Lower lobe of right lung (tissue), 2 donors: ENCODE measurements at regions of chr4 and their contacts with region 1.

Region 1: GRCh38 chr4:78612398-78613178 is 61.0 kb downstream of the ANXA3 start:
- DNase-seq: no peak
- ATAC-seq: peak; percentile 52 to 73
- H3K4me3 ChIP-seq: no peak overlapping the region
- H3K27ac ChIP-seq: no peak overlapping the region
- H3K4me1 ChIP-seq: peaks cover 10% of the 10 kb centered on the region
- H3K27me3 ChIP-seq: no peaks in the 10 kb centered on the region
- CTCF ChIP-seq: peak; percentile 60

Region 2: DNA sequence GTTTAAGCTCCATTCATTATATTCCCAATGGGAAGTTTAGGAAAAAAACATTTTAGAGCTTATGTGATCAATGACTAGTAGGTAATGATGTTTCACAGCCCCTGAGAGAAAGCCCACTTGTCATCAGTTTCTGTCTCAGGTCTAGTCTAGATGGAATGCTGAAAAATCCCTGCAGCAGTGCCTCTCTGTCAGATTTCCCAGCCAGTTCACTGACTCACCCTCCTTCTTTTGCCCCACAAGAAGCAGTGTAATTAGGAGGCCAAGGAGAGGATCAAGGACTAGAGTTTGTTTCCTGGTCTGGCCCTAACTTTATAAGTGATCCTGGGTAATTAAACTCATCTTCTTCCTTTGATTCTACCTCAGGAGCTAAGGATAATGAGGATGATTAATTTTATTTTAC is 179.7 kb before region 1 on chr4:
- intact Hi-C with region 1: no loop called
- DNase-seq: no peak
- ATAC-seq: no peak
- H3K4me3 ChIP-seq: no peak overlapping the region
- H3K27ac ChIP-seq: no peak overlapping the region
- H3K4me1 ChIP-seq: no peaks in the 10 kb centered on the region
- H3K27me3 ChIP-seq: no peaks in the 10 kb centered on the region
- CTCF ChIP-seq: no peak

Region 3: DNA sequence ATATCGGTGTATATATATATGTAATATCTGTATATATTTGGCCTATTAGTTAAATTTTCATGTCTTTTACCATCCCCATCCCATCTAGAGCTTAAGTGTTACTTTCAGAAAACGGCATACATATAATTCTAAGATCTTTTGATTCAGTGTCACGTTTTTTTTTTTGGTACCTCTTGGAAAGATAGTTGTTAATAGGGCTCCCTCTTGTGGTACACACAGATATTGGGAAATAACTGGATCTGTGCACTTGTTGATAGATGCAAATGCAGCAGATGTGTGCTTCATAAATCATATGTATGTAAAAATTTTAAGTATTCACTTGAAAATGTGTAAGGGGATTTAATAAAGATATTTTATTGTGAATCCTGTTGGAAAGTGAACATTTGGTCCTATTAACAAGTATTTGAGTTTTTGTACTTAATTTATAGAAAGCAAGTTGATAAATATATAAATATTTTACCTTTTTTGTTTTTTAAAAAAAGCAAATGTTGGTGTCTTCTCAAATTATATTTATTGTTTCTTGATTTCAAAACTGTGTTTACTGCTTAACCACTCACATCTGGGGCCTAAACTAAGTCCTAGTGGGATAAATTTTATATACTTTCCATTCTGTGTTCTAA is 251.9 kb after region 1 on chr4:
- intact Hi-C with region 1: loop called (anchors 5 kb)
- DNase-seq: no peak
- ATAC-seq: peak; percentile 59 to 76
- H3K4me3 ChIP-seq: no peak overlapping the region
- H3K27ac ChIP-seq: no peak overlapping the region
- H3K4me1 ChIP-seq: no peaks in the 10 kb centered on the region
- H3K27me3 ChIP-seq: no peaks in the 10 kb centered on the region
- CTCF ChIP-seq: peak; percentile 77